Transverse colon (tissue), 4 donors: ENCODE measurements at regions of chr6 and their contacts with region 1.

Region 1: DNA sequence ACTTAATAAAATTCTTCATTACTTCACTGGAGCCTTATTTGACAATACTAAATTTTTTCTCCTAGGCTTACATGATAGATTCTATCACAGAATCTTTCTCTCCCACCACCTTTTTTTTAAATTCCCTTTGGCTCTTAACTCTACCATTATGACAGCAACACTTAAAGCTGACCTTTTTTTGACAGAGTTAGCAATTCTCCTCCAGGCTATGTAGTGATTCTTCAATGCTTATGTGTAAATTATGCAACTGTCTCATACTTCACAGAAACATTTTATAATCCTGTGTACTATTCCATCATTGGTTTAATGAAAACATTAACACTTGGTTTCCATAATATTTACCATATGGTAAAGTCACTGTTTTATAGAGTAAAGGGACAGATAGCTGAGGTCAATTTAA is 203.5 kb upstream of the QKI start:
- DNase-seq: no peak
- H3K4me3 ChIP-seq: no peak overlapping the region
- H3K27ac ChIP-seq: no peak overlapping the region
- H3K4me1 ChIP-seq: no peaks in the 10 kb centered on the region
- H3K27me3 ChIP-seq: no peaks in the 10 kb centered on the region
- CTCF ChIP-seq: no peak
- EP300 ChIP-seq: no peak
- POLR2A ChIP-seq: no peak

Region 2: DNA sequence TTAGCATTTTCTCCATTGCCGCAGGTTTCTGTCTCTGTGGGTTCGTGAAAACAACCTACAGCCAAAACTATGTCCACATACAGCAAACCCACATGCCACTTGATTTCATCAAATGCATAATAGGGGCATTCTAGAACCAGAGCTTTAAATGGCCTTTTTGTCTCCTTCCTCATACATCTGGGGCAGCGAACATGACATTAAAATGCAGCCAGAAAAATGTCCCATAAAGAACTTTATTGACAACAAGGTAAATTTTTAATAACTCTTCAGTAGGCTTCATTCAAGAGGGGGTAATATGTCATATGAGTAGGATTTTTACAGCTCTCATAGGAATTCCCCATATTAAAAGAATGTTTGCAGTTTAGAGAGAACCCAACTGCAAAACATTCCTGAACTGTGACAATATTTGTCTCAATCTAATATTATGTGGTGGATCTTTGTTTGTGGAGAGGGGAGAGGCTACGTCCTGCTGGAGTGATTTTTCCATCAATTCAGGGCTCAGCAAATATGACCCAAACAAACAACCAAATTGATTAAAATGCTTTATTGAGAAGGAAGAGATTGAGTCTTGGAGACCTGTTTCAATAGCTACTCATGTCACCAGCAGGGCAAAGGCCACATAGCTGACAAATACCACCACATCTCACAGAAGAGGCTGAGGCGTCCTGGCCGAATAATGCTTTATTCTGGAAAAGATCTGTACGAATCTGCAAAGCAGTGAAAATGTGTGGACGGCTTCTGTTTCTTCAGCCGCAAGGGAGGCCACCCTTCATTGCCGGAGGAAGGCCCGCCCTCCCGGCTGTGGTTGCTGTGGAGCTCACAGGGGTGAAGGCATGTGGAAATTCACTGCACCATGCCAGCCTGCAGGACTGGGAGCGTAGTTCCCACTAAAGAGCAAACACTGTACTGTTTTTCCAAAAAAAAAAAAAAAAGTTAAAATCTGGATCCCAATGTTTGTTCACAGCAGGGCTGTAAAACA is 113.7 kb after region 1 on chr6:
- in situ Hi-C with region 1: no loop called
- intact Hi-C with region 1: no loop called
- DNase-seq: no peak
- H3K4me3 ChIP-seq: no peak overlapping the region
- H3K27ac ChIP-seq: peak overlapping the region in 1 of 4 donors; percentile 21
- H3K4me1 ChIP-seq: no peaks in the 10 kb centered on the region
- H3K27me3 ChIP-seq: no peaks in the 10 kb centered on the region
- CTCF ChIP-seq: no peak
- EP300 ChIP-seq: no peak
- POLR2A ChIP-seq: no peak

Region 3: GRCh38 chr6:164453835-164454234 is 1242.8 kb after region 1 on chr6:
- in situ Hi-C with region 1: no loop called
- intact Hi-C with region 1: loop called (anchors 5 kb)
- DNase-seq: no peak
- H3K4me3 ChIP-seq: no peak overlapping the region
- H3K27ac ChIP-seq: no peak overlapping the region
- H3K4me1 ChIP-seq: no peaks in the 10 kb centered on the region
- H3K27me3 ChIP-seq: no peaks in the 10 kb centered on the region
- CTCF ChIP-seq: no peak
- EP300 ChIP-seq: no peak
- POLR2A ChIP-seq: no peak